ENCODE measurements at regions of chr3 and their contacts with region 1.

Region 1: GRCh38 chr3:184005941-184006507 is 11.7 kb downstream of the ABCC5 start:
- DNase-seq: peak; percentile 32
- H3K4me3 Mint-ChIP-seq: no peak overlapping the region
- H3K27ac Mint-ChIP-seq: peak overlapping the region; percentile 5
- H3K4me1 Mint-ChIP-seq: peaks cover 10% of the 10 kb centered on the region
- H3K27me3 Mint-ChIP-seq: no peaks in the 10 kb centered on the region

Region 2: GRCh38 chr3:184016811-184017671 is 11.0 kb after region 1 on chr3:
- CTCF ChIA-PET with region 1: interaction called, 13 read pairs
- DNase-seq: peak; percentile 65
- H3K4me3 Mint-ChIP-seq: peak overlapping the region; percentile 100
- H3K27ac Mint-ChIP-seq: peak overlapping the region; percentile 90
- H3K4me1 Mint-ChIP-seq: peaks cover 36% of the 10 kb centered on the region
- H3K27me3 Mint-ChIP-seq: peaks cover 27% of the 10 kb centered on the region